Activated CD8-positive, alpha-beta memory T cell treated with anti-CD3 and anti-CD28 coated beads, Interleukin-2, amount 10 ng/mL, durations not matched to agents 7 days and 5 days (primary cell): ENCODE measurements at regions of chr12 and their contacts with region 1.

Region 1: DNA sequence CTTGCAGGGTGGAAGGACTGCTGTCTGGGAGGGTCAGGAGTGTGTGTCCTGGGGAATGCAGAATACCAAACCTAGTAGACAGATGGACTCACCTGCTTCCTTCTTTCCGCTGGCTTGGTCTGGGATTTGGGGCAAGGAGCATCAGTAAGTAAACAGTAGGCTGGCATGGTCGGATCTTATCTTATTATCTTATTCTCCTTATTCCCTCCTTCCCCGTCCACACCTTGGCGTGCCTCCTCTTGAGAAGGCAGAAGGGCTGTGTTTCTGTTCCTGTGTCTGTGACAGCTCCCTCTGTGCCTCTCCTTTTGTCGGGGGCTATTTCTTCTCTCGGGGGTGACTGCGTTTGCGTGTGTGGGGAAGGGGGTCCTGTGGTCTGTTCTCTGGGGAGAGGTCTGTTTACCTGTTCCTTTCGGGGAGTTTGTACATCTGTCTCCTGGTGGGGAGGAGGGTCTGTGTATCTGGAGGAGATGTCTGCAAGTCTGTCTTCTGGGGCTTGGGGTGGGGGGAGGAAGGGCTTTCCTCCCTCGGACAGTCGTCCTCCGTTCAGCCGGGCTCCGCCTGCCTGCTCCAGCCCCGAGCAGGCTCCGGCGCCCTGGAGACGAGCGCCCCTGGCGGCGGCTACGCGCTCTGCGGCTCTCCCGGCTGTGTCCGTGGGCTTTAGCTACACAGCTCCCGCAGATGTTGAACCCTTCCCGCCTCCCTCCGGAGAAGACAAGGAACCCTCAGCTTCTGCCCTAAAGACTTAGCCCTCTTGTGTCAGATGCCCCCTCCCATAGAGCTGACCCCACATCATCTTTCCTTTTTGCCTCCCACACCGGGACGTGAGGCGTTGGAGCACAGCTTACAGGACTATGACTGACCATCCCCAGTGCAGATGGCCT is 4.3 kb downstream of the KRT86 start:
- DNase-seq: peak; percentile 79
- ATAC-seq: peak; percentile 99
- H3K4me3 Mint-ChIP-seq: no peak overlapping the region
- H3K27ac Mint-ChIP-seq: no peak overlapping the region
- H3K4me1 Mint-ChIP-seq: peaks cover 5% of the 10 kb centered on the region
- H3K27me3 Mint-ChIP-seq: peaks cover 60% of the 10 kb centered on the region

Region 2: GRCh38 chr12:52221912-52222457 is 56.8 kb before region 1 on chr12:
- CTCF ChIA-PET with region 1: interaction called, 35 read pairs
- DNase-seq: peak; percentile 84
- ATAC-seq: peak; percentile 80
- H3K4me3 Mint-ChIP-seq: no peak overlapping the region
- H3K27ac Mint-ChIP-seq: no peak overlapping the region
- H3K4me1 Mint-ChIP-seq: peaks cover 8% of the 10 kb centered on the region
- H3K27me3 Mint-ChIP-seq: peaks cover 74% of the 10 kb centered on the region

Region 3: GRCh38 chr12:52268212-52268611 is 10.6 kb before region 1 on chr12:
- CTCF ChIA-PET with region 1: interaction called, 74 read pairs
- DNase-seq: no peak
- ATAC-seq: no peak
- H3K4me3 Mint-ChIP-seq: no peak overlapping the region
- H3K27ac Mint-ChIP-seq: no peak overlapping the region
- H3K4me1 Mint-ChIP-seq: no peaks in the 10 kb centered on the region
- H3K27me3 Mint-ChIP-seq: peaks cover 37% of the 10 kb centered on the region

Region 4: DNA sequence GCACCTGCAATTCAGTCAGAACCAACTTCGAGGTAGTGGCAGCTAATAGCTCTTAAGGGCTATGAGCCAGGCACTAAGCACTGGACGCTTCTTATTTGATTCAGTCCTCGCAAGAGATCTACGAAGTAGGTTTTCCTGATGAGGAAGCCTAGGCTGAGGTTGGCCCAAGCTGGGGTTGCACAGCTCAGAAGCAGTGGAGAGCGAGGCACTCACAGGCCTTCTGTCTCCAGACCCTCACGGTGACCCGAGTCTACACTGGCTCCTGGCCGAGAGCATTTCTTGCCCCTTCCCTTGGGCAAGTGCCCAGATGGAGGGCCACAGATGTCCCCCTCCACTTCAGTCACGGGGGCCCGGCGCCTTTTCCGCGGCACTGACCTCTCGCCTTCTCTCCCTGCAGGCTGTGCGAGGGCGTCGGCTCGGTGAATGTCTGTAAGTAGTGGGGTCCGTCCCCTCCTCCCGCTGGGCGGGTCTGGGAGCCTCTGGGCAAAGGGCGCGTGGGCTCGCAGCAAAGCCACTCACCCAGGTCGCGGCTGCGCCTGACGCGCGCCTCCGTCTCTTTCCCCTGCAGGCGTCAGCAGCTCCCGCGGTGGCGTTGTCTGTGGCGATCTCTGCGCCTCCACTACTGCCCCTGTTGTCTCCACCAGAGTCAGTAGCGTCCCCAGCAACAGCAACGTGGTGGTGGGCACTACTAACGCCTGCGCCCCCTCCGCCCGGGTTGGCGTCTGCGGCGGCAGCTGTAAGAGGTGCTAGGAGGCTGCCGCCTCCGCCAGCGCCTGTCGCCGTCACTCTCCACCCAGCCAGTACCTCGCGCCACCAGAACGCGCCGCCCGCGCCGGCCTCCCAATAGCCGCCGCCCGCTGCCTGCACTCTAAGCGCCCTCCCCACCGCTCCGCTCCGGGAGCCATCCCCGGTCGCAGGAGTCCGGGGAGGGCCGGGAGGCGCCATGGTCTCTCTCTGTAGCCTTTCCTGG is 29.3 kb after region 1 on chr12:
- CTCF ChIA-PET with region 1: interaction called, 48 read pairs
- DNase-seq: peak; percentile 63
- ATAC-seq: peak; percentile 84
- H3K4me3 Mint-ChIP-seq: peak overlapping the region; percentile 55
- H3K27ac Mint-ChIP-seq: no peak overlapping the region
- H3K4me1 Mint-ChIP-seq: peaks cover 23% of the 10 kb centered on the region
- H3K27me3 Mint-ChIP-seq: peaks cover 77% of the 10 kb centered on the region